Adrenal gland (tissue), 19 donors: ENCODE measurements at regions of chr9 and their contacts with region 1.

Region 1: DNA sequence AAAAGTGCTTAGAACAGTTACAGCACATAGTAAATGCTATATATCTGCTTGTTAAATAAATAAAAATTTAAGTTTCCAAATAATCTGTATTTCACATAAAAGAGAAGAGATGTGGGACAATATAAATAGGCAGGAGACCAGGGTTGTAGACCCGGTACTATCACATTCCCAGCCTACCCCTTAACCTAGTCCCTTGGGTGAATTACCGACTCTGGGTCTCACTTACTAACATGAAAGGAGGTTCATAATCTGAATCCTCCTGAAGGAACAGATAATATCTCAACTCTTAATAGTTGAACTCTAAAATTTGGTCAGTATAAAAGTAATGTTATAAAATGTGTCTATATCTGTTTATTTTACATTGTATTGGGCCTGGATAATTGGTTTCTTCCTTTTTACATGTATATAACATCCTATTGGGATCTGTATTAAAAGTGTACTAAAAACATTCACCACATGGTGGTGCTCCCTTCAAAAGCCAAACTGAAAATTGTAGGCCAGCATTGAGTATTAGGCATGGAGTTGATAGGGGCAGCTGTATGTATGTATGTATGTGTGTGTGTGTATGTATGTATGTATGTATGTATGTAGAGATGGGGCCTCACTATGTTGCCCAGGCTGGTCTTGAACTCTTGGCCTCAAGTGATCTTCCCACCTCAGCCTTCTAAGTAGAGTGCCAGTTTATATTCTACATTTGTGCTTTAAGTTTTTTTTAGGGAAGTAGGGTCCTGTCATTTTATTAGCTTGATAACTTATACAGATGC is 64.2 kb upstream of the ABL1 start:
- DNase-seq: no peak
- H3K4me3 ChIP-seq: no peak overlapping the region
- H3K27ac ChIP-seq: no peak overlapping the region
- H3K4me1 ChIP-seq: peaks cover 3 to 10% of the 10 kb centered on the region in 2 donors
- H3K27me3 ChIP-seq: no peaks in the 10 kb centered on the region
- CTCF ChIP-seq: peak; percentile 40 to 83 (median 69)
- POLR2A ChIP-seq: no peak

Region 2: DNA sequence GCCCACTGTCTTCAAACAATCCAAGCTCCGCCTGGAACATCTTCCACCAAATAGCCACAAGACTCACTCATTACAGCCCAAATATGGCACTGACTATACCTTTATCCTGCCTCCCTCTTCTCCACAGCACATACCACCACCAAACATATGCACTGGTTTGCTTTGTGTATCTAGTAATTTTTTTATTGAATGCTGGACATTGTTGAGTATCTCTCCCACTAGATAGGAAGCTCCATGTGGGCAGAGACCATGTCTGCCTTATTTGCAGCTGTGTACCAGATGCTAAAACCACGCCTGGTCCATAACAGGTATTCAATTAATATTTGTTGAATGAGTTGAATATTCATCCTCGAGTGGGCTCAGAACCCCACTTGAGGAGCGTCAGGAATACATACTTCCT is 258.7 kb before region 1 on chr9:
- intact Hi-C with region 1: no loop called
- DNase-seq: no peak
- H3K4me3 ChIP-seq: no peak overlapping the region
- H3K27ac ChIP-seq: no peak overlapping the region
- H3K4me1 ChIP-seq: no peaks in the 10 kb centered on the region
- H3K27me3 ChIP-seq: no peaks in the 10 kb centered on the region
- CTCF ChIP-seq: no peak
- POLR2A ChIP-seq: no peak

Region 3: DNA sequence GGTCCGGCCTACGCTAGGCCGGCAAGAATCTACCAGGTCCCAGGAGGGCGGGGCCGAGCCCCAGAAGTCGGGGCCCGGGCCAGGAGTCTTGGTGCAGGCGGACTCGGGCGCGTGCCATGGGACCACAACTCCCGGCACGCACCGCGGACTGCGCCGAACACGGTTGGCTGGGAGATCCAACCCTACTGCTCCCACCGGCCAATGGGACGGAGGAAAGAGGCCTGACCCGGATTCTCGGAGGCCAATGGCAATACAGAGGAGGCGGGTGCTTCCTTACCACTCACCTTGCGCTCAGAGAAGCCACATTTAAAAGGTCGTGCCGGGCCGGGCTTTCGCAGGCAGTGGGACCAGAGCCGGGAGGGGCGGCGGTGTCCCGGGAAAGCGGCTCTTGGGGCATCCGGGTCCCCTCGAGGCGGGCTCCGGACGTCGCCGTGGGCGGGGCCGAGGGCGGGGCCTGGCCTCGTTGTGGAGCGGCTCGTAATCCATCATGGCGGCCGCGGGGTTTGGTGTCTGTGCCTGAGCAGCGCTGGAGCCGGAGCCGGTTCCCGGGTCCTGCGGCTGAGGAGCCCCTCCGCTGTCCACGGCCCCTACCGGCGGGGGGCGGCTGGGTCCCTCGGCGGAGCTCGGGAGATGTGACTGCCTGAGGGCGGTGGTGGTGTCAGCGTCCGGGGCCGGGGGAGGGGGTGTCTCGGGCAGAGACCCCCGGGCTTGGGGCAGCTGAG is 58.1 kb before region 1 on chr9:
- intact Hi-C with region 1: loop called (anchors 5 to 10 kb)
- DNase-seq: peak; percentile 97 to 99 (median 99)
- H3K4me3 ChIP-seq: peak overlapping the region; percentile 47 to 82 (median 78)
- H3K27ac ChIP-seq: peak overlapping the region; percentile 94 to 99 (median 96)
- H3K4me1 ChIP-seq: peaks cover 18 to 31% of the 10 kb centered on the region in 2 donors
- H3K27me3 ChIP-seq: no peaks in the 10 kb centered on the region
- CTCF ChIP-seq: no peak
- POLR2A ChIP-seq: peak; percentile 61 to 85

Region 4: DNA sequence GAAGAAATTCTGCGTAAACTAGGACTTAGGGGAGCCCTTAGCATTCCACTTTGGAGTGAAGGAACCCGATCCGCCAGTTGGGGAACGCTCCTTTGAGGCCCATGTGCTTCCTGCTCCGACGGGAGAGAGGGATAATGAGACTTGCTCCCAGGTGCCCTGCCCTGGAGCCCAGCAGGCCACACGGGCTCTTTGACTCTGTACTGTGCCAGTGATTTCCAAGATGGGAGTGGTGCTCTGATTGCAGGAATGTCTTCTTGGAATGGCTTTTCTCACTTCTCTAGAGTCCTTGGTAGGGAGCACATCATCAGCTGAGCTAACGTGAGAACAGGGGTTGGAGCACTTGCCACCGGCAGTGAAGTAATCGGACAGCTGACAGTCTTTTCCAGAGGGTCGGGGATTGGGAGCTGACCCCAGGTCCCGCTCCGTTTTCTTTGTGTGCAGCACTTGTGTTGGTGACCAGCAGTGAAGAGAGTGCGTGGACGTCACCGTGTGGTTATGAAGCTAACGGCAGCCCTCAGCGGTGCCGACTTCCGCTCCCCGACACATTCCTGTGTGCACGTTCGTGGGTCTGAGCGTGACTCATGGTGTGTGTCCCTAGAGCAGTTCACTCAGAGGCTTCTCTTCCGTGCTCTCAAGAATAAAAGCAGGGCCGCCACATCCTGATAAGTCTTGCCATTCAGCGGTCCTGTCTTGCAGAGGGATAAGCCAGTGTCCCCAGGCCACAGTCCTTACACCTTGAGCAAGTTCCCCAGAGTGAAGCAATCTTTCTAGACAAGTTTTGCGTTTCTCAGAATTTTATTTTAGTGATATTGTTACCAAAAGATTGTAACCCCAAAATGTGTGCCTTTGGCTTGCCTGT is 89.8 kb after region 1 on chr9:
- intact Hi-C with region 1: loop called (anchors 5 kb)
- DNase-seq: peak; percentile 52 to 94 (median 89)
- H3K4me3 ChIP-seq: no peak overlapping the region
- H3K27ac ChIP-seq: peak overlapping the region; percentile 21 to 91 (median 55)
- H3K4me1 ChIP-seq: peaks cover 0 to 15% of the 10 kb centered on the region in 2 donors
- H3K27me3 ChIP-seq: no peaks in the 10 kb centered on the region
- CTCF ChIP-seq: peak in 3 of 6 experiments; percentile 39 to 48 (median 46)
- POLR2A ChIP-seq: peak in 1 of 2 donors; percentile 28

Region 5: DNA sequence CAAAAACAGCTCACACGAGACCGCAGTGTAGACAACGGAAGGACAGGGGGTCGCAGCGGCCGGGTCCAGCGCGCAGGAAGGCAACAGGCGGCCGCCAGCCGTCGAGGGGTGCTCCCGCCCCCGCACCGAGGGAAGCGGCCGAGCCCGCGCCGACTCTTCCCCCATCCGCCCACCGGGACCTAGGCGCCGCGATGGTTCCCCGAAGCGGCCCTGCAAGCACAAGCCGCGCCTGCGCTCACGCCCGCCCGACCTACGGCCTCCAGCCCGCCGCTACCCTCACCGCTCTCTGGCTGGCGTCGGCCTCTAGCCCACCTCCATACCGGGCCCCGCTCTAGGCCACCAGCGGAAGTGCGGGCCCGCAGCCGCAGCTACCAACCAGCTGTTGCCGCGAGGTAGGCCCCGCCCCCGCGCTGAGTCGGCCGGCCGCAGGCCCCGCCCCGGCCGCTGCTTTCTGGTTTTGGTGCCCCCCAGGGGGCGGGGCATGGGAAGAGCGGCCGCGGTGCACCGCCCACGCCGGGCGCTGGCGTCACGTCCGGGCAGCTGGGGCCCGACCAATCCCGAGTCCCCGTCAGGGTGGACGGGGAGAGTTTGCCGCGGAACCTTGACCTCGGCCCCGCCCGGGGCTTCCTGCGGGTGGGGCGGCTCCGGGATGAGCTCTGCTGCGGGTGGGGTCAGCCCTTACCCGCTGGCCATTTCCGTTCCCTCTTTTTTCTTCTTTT is 1583.9 kb after region 1 on chr9 and contains the start of gene SETX:
- intact Hi-C with region 1: no loop called
- DNase-seq: peak; percentile 96 to 99 (median 98)
- H3K4me3 ChIP-seq: peak within 1 kb of the TSS; percentile 37 to 80 (median 54)
- H3K27ac ChIP-seq: peak within 1 kb of the TSS; percentile 76 to 97 (median 93)
- H3K4me1 ChIP-seq: peaks cover 21 to 40% of the 10 kb centered on the region in 2 donors
- H3K27me3 ChIP-seq: no peaks in the 10 kb centered on the region
- CTCF ChIP-seq: peak in 2 of 6 experiments; percentile 7 to 28
- POLR2A ChIP-seq: peak; percentile 93 to 96
- total RNA-seq, gene SETX: 36.5 to 71.7 (median 44.4) TPM